ENCODE measurements at regions of chr6 and their contacts with region 1.

Region 1: GRCh38 chr6:131532580-131533039 is 40.4 kb upstream of the ARG1 start:
- DNase-seq: no peak
- ATAC-seq: no peak
- H3K4me3 ChIP-seq: no peak overlapping the region
- H3K27ac ChIP-seq: no peak overlapping the region
- H3K4me1 ChIP-seq: no peaks in the 10 kb centered on the region
- H3K27me3 ChIP-seq: no peaks in the 10 kb centered on the region
- CTCF ChIP-seq: no peak
- POLR2A ChIP-seq: no peak

Region 2: DNA sequence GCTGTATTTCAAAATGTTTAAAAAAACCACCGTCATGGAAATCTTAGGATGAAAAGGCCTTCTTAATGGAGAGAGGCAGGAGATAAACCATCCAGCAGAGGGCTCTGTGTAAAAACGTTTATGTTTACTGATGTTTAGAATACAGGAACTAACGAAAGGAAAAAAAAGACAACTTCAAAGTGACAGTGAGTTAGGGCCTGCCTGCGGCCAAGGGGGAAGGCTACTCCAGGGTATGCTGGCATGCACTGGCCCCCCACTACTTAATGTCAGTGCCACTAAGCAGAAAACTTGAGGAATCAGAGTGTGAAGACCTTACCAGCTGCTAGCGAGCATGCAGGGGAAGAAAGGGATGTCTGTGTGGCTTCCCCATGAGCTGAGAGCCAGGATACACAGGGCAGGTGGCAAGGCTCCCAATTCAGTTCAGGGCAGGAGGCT is 349.6 kb before region 1 on chr6:
- intact Hi-C with region 1: loop called in 1 of 10 experiments (anchors 5 kb)
- DNase-seq: no peak
- ATAC-seq: no peak
- H3K4me3 ChIP-seq: no peak overlapping the region
- H3K27ac ChIP-seq: no peak overlapping the region
- H3K4me1 ChIP-seq: peaks cover 0 to 4% (median 0%) of the 10 kb centered on the region in 12 donors
- H3K27me3 ChIP-seq: no peaks in the 10 kb centered on the region
- CTCF ChIP-seq: peak in 10 of 12 donors; percentile 8 to 50 (median 32)
- POLR2A ChIP-seq: no peak

Region 3: GRCh38 chr6:131199568-131200272 is 332.9 kb before region 1 on chr6:
- intact Hi-C with region 1: loop called in 9 of 10 experiments (anchors 2 to 10 kb)
- DNase-seq: peak in 2 of 5 donors; percentile 25 to 40
- ATAC-seq: peak in 3 of 4 donors; percentile 78 to 88 (median 87)
- H3K4me3 ChIP-seq: peak overlapping the region in 1 of 12 donors; percentile 26
- H3K27ac ChIP-seq: peak overlapping the region in 1 of 12 donors; percentile 70
- H3K4me1 ChIP-seq: peaks cover 0 to 6% (median 0%) of the 10 kb centered on the region in 12 donors
- H3K27me3 ChIP-seq: no peaks in the 10 kb centered on the region
- CTCF ChIP-seq: peak; percentile 17 to 72 (median 62)
- POLR2A ChIP-seq: no peak